ENCODE measurements at regions of chr2 and their contacts with region 1.

Region 1: DNA sequence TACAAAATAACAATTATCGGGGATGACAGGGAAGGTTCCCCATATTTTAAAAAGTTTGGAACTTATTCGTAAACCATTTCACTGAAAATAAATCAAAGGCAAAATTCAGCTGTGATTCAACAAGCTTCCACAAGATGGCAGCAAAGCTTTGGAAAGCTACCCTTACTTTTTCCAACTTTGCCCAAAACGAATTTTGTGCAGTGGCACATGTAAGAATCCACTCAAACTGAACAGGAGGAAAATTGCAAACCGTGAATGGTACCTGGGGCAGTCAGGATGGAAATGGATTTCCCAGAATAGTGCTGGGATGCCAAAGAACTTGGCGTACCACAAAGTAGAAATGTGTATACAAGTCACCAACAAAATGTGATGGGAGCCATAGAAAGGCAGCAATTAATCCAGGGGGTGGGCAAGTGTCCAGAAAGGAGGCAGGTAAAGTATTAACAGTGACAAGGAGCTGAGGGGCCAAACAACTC is 10.7 kb downstream of the RPL31 start:
- DNase-seq: peak; percentile 49
- ATAC-seq: no peak
- H3K4me3 Mint-ChIP-seq: no peak overlapping the region
- H3K27ac Mint-ChIP-seq: peak overlapping the region; percentile 55
- H3K4me1 Mint-ChIP-seq: peaks cover 31% of the 10 kb centered on the region
- H3K27me3 Mint-ChIP-seq: no peaks in the 10 kb centered on the region

Region 2: GRCh38 chr2:100142393-100142792 is 870.4 kb before region 1 on chr2 and contains the start of gene AFF3:
- CTCF ChIA-PET with region 1: no interaction called
- POLR2A ChIA-PET with region 1: no interaction called
- intact Hi-C with region 1: loop called in 1 of 2 experiments (anchors 5 kb)
- DNase-seq: peak; percentile 79
- ATAC-seq: peak; percentile 94
- H3K4me3 Mint-ChIP-seq: peak within 1 kb of the TSS; percentile 88
- H3K27ac Mint-ChIP-seq: peak within 1 kb of the TSS; percentile 94
- H3K4me1 Mint-ChIP-seq: peaks cover 55% of the 10 kb centered on the region
- H3K27me3 Mint-ChIP-seq: peaks cover 5% of the 10 kb centered on the region
- total RNA-seq, gene AFF3: 5.6 TPM

Region 3: GRCh38 chr2:100976645-100977391 is 35.9 kb before region 1 on chr2:
- CTCF ChIA-PET with region 1: no interaction called
- POLR2A ChIA-PET with region 1: no interaction called
- intact Hi-C with region 1: no loop called
- DNase-seq: no peak
- ATAC-seq: no peak
- H3K4me3 Mint-ChIP-seq: no peak overlapping the region
- H3K27ac Mint-ChIP-seq: no peak overlapping the region
- H3K4me1 Mint-ChIP-seq: no peaks in the 10 kb centered on the region
- H3K27me3 Mint-ChIP-seq: no peaks in the 10 kb centered on the region

Region 4: GRCh38 chr2:101106453-101107181 is 93.9 kb after region 1 on chr2:
- CTCF ChIA-PET with region 1: no interaction called
- POLR2A ChIA-PET with region 1: no interaction called
- intact Hi-C with region 1: no loop called
- DNase-seq: no peak
- ATAC-seq: no peak
- H3K4me3 Mint-ChIP-seq: no peak overlapping the region
- H3K27ac Mint-ChIP-seq: no peak overlapping the region
- H3K4me1 Mint-ChIP-seq: no peaks in the 10 kb centered on the region
- H3K27me3 Mint-ChIP-seq: no peaks in the 10 kb centered on the region

Measured in activated CD4-positive, alpha-beta T cell treated with anti-CD3 and anti-CD28 coated beads for 36 hours (primary cell).